ENCODE measurements at regions of chr5 and their contacts with region 1.

Region 1: GRCh38 chr5:169325273-169325672 is 24.3 kb upstream of the SLIT3 start:
- DNase-seq: no peak
- H3K4me3 ChIP-seq: no peak overlapping the region
- CTCF ChIP-seq: no peak

Region 2: GRCh38 chr5:168916266-168916665 is 409.0 kb before region 1 on chr5:
- in situ Hi-C with region 1: loop called (anchors 10 kb)
- DNase-seq: no peak
- H3K4me3 ChIP-seq: no peak overlapping the region
- CTCF ChIP-seq: no peak

Measured in astrocyte of the cerebellum (primary cell).